ENCODE measurements at regions of chr3 and their contacts with region 1.

Region 1: DNA sequence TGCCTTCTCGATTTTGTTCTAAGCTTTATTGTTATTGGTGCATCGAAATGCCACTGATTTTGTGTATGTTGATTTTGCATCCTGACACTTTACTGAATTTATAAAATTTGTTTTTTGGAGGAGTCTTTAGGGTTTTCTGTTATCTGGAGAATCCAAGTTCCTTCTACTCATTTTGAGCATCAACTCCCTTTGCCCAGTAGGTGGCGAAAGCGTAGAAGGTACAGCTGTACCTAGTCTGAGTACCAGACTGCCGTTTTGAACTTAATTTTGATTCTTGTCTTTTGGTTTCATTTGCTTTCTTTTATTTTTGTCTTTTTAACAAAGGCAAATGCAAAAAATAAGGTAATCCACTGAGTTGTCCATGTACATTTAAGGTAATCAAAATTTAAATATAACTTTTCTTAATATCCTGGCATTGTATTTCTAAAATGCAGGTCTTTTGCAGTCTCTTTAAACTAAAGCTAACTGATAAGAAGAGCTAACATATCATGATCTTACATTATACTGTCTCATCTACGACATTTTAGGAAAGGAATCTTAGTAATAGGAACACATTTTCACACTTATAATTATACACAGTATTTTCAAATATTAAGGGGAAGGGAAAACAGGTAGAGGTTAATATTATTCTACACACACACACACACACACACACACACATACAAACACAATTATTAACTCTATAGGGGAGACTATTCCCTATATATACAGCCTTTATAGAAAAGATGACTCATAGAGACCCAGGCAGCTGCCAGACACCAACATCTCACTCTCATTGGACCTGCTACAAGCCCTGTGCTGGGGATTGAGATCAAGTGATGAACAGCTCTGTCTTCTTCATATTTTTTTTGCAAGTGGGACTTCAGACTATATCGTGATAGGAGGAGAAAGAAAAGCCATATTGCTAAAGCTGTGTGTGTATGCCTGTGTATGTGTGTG is 71.7 kb downstream of the SYNPR start:
- DNase-seq: peak in 3 of 4 donors; percentile 37 to 64 (median 45)
- ATAC-seq: peak; percentile 87
- H3K4me3 ChIP-seq: no peak overlapping the region
- H3K27ac ChIP-seq: no peak overlapping the region
- H3K4me1 ChIP-seq: no peaks in the 10 kb centered on the region
- H3K27me3 ChIP-seq: peaks cover 0 to 20% of the 10 kb centered on the region in 2 donors
- CTCF ChIP-seq: peak; percentile 56 to 65

Region 2: DNA sequence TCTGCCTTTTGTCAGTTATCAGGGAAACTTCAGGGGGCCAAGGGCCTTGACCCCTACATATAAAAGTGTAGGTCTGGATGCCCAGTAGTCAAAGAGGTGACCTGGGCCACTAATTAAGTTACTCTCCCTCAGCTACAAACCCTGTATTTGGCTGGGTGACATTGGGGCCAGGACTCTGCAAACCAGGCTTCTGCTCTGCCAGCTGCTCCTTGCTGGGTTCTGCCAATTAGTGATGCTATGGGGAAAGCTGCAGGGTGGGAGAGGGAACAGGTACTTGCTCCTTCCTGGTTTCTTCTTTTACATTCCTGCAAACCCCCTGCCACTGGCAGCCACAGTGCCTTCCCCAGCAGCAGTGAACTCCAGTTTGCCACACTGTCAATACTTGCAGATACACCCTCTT is 653.8 kb before region 1 on chr3:
- intact Hi-C with region 1: no loop called
- DNase-seq: no peak
- ATAC-seq: no peak
- H3K4me3 ChIP-seq: no peak overlapping the region
- H3K27ac ChIP-seq: no peak overlapping the region
- H3K4me1 ChIP-seq: no peaks in the 10 kb centered on the region
- H3K27me3 ChIP-seq: no peaks in the 10 kb centered on the region
- CTCF ChIP-seq: no peak

Region 3: GRCh38 chr3:63818281-63819150 is 468.7 kb after region 1 on chr3:
- intact Hi-C with region 1: loop called in 1 of 2 experiments (anchors 5 kb)
- DNase-seq: peak in 3 of 4 donors; percentile 40 to 72 (median 60)
- ATAC-seq: peak; percentile 94
- H3K4me3 ChIP-seq: no peak overlapping the region
- H3K27ac ChIP-seq: no peak overlapping the region
- H3K4me1 ChIP-seq: peaks cover 0 to 4% of the 10 kb centered on the region in 2 donors
- H3K27me3 ChIP-seq: no peaks in the 10 kb centered on the region
- CTCF ChIP-seq: peak; percentile 81 to 87

Region 4: GRCh38 chr3:63993653-63994079 is 643.8 kb after region 1 on chr3:
- intact Hi-C with region 1: loop called in 1 of 2 experiments (anchors 10 kb)
- DNase-seq: peak; percentile 56 to 81 (median 70)
- ATAC-seq: peak; percentile 98
- H3K4me3 ChIP-seq: no peak overlapping the region
- H3K27ac ChIP-seq: no peak overlapping the region
- H3K4me1 ChIP-seq: peaks cover 0 to 16% of the 10 kb centered on the region in 2 donors
- H3K27me3 ChIP-seq: no peaks in the 10 kb centered on the region
- CTCF ChIP-seq: peak; percentile 93 to 94

Measured in left lung (tissue), 14 donors.